Activated T-helper 2 cell treated with anti-CD3 and anti-CD28 coated beads, Interferon-gamma antibody, Interleukin-2, Interleukin-4, amounts not matched to agents 10 μg/mL and 5 μg/mL and 100 μg/mL, durations not matched to agents 14 hours and 24 hours and 36 hours (primary cell): ENCODE measurements at regions of chr3 and their contacts with region 1.

Region 1: DNA sequence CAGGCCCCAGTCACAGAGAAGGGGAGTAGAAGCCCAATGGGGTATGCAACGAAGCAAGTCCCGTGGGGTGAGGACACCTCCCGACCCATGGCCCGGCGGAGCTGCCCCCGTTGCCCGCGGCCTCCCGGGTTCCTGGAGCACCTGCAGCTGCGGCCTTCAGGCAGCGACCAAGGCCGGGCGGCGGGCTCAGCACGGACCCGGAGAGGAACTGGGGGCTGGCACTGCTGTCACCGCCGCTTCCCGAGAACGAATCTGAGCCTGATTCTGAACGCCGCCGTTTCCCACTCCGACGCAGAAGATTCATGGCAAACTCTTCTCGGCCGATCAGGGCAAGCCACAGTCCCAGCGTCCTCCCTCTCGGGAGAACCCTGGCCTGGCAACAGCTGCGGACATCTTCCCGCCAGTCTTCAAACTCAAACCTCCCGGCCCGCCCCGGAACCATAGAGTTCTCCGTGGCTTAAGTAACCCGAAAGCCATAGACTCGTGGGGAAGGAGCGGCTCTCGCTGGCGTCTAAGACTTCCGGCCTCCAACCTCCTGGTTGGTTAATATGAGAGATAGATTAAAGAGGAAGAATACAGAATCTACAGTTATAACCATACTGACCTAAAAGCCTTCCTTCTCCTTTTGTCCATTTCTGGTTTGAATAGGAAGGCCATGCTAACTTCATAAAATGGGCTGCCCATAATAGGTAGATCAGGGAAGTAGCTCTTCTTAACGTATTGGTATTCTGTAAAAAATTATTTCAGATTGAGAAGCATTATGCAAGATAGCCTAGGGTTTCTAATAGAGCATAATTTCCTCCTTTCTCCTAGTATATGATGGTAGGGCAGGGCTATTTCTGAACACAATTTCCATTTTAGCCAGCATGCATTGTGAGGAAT is at the start of gene POLQ:
- DNase-seq: peak; percentile 84
- H3K4me3 Mint-ChIP-seq: peak within 1 kb of the TSS; percentile 91
- H3K27ac Mint-ChIP-seq: peak within 1 kb of the TSS; percentile 93
- H3K4me1 Mint-ChIP-seq: peaks cover 30% of the 10 kb centered on the region
- H3K27me3 Mint-ChIP-seq: no peaks in the 10 kb centered on the region
- total RNA-seq, gene POLQ: 23.8 and 24.0 TPM in 2 replicates

Region 2: GRCh38 chr3:121749276-121750086 is 203.7 kb after region 1 on chr3 and contains the start of gene GOLGB1:
- intact Hi-C with region 1: loop called (anchors 1 kb)
- DNase-seq: peak; percentile 91
- H3K4me3 Mint-ChIP-seq: no peak within 1 kb of the TSS
- H3K27ac Mint-ChIP-seq: no peak within 1 kb of the TSS
- H3K4me1 Mint-ChIP-seq: peaks cover 7% of the 10 kb centered on the region
- H3K27me3 Mint-ChIP-seq: peaks cover 15% of the 10 kb centered on the region
- total RNA-seq, gene GOLGB1: 26.4 and 28.2 TPM in 2 replicates

Region 3: GRCh38 chr3:122074621-122075265 is 528.9 kb after region 1 on chr3:
- intact Hi-C with region 1: loop called (anchors 5 kb)
- DNase-seq: peak; percentile 57
- H3K4me3 Mint-ChIP-seq: peak overlapping the region; percentile 84
- H3K27ac Mint-ChIP-seq: peak overlapping the region; percentile 97
- H3K4me1 Mint-ChIP-seq: peaks cover 59% of the 10 kb centered on the region
- H3K27me3 Mint-ChIP-seq: no peaks in the 10 kb centered on the region

Region 4: DNA sequence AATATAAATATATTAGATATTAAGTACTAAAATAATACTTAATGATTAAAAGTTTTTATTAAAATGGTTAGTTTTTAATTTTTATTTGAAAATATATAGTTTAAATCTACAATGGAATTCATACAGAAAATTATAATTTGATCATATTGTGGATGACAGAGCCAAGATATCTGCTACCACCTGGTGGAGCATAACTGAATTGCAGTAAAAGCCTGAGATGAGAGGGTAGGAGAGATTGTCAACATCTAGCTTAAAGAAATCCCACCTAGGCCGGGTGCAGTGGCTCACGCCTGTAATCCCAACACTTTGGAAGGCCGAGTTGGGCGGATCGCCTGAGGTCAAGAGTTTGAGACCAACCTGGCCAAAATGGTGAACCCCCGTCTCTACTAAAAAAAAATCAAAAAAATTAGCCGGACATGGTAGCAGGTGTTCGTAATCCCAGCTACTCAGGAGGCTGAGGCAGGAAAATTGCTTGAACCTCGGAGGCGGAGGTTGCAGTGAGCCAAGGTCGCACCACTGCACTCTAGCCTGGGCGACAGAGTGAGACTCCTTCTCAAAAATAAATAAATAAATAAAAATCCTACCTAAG is 754.2 kb after region 1 on chr3:
- intact Hi-C with region 1: loop called (anchors 1 kb)
- DNase-seq: no peak
- H3K4me3 Mint-ChIP-seq: no peak overlapping the region
- H3K27ac Mint-ChIP-seq: no peak overlapping the region
- H3K4me1 Mint-ChIP-seq: peaks cover 24% of the 10 kb centered on the region
- H3K27me3 Mint-ChIP-seq: peaks cover 1% of the 10 kb centered on the region

Region 5: DNA sequence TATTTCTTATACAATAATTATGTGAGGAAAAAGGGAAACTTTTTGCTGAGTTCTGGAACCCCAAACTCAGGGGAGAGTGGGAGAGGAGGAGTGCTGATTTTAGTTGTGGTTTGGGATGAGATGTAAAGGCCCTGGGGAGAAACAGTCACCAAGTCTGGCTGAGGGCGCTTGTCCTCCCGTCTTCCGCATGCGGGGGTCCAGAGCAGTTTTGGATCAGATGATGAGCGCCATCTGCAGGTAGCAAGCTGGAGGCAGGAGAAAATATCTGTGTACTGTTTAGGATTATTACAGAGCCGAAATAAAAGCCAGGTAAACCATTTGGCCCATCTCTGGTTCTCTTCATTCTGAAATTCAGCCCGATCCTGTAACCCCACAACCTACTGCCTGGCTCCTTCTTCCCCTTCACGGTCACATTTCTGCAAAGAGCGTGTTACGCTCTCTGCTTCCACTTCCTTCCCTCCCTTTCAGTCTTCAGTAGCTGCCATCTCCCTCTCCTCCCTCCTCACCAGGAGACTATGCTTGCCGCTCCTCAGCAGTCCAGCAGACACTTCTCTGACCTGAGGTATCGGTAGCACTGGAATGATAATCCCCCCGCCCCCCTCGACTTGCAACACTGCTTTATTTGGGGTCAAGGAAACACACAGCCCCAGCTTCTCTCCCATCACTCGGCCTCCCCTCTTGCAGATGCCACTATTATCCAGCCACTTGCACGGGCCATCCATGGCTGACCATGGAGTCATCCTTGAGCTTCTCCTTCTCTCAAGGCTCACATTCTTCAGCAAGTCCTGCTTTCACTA is 1133.5 kb after region 1 on chr3:
- intact Hi-C with region 1: loop called (anchors 1 kb)
- DNase-seq: peak; percentile 77
- H3K4me3 Mint-ChIP-seq: peak overlapping the region; percentile 94
- H3K27ac Mint-ChIP-seq: peak overlapping the region; percentile 98
- H3K4me1 Mint-ChIP-seq: peaks cover 53% of the 10 kb centered on the region
- H3K27me3 Mint-ChIP-seq: no peaks in the 10 kb centered on the region